Left ventricle myocardium superior (tissue), 1 donor: ENCODE measurements at regions of chr2 and their contacts with region 1.

Region 1: GRCh38 chr2:64767670-64768468 is 114.2 kb upstream of the SERTAD2 start:
- DNase-seq: peak; percentile 93
- ATAC-seq: peak; percentile 96

Region 2: DNA sequence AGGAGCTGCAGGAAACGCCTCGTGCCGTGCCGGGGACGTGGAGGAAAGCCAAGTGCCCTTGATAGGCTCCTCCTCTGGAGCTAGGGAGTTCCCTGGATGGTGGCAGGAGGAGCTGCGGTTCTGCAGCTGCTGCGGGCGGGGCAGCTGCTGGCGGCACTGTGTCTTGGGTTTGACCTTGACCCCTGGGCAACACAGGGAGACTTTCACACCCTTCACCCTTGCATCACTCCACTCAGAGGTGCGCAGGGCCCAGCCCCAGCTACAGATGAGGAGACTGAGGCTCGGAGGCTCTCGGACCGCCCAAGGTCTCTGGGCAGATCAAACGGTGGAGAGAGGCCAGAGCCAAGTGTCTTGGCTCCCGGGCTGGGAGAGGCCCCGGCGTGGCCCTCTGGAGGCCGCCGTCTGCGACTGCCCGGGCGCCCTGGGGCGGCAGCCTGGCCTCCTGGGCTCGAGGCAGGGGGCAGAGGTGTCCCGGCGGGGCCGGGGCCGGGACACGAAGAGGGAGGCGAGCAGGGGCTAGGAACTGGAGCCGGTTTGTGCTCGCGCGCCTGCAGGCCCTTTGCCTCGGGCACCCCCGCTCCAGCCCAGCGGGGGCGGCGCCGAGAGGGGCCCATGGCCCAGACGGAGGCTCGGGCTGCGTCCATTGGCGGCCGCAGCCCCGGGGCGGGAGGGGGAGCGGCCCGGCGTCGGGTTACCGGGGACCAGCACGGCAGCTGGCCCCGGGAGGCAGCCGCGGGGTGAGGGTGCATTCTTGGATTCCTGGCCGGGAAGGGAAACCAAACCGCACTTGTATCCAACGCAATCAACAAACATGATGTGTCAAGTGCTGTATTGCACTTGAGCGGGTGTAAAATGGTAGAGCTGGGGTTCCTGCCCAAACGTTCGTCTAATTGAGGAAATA is 91.7 kb after region 1 on chr2:
- intact Hi-C with region 1: loop called (anchors 10 kb)
- DNase-seq: peak; percentile 92
- ATAC-seq: peak; percentile 90